ENCODE measurements at regions of chr3 and their contacts with region 1.

Region 1: DNA sequence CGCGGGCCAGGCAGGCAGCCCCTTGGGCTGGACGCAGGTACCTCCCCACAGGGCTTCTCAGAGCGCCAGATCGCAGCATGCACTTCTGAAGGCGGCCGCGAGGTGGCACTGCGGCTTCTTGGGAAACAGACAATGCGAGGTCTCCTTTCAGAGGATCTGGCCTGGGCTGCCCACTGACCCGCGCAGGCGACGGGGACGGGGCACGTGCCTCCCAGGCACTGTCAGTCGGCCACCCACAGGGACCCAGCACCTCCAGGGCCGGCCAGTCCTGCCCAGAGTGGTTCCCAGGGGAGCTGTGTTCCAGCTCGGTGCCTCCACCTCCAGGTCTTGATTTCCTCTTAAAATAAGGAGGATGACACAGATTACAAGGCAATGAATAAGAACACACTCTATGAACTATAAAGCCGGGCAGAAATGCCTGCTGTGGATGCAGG is 24.4 kb upstream of the TXNRD3 start:
- DNase-seq: no peak
- H3K4me3 ChIP-seq: peak overlapping the region; percentile 35; the same call in 1 of the 2 replicates
- CTCF ChIP-seq: peak; percentile 97

Region 2: GRCh38 chr3:126197854-126198584 is 481.3 kb before region 1 on chr3:
- CTCF ChIA-PET with region 1: no interaction called
- POLR2A ChIA-PET with region 1: no interaction called
- DNase-seq: no peak
- H3K4me3 ChIP-seq: no peak overlapping the region
- CTCF ChIP-seq: peak; percentile 89

Region 3: GRCh38 chr3:126431103-126431534 is 248.2 kb before region 1 on chr3:
- CTCF ChIA-PET with region 1: no interaction called
- POLR2A ChIA-PET with region 1: no interaction called
- DNase-seq: no peak
- H3K4me3 ChIP-seq: no peak overlapping the region
- CTCF ChIP-seq: no peak

Region 4: GRCh38 chr3:126522363-126522788 is 157.0 kb before region 1 on chr3:
- CTCF ChIA-PET with region 1: interaction called, 20 read pairs
- POLR2A ChIA-PET with region 1: no interaction called
- DNase-seq: no peak
- H3K4me3 ChIP-seq: no peak overlapping the region
- CTCF ChIP-seq: peak; percentile 83

Region 5: DNA sequence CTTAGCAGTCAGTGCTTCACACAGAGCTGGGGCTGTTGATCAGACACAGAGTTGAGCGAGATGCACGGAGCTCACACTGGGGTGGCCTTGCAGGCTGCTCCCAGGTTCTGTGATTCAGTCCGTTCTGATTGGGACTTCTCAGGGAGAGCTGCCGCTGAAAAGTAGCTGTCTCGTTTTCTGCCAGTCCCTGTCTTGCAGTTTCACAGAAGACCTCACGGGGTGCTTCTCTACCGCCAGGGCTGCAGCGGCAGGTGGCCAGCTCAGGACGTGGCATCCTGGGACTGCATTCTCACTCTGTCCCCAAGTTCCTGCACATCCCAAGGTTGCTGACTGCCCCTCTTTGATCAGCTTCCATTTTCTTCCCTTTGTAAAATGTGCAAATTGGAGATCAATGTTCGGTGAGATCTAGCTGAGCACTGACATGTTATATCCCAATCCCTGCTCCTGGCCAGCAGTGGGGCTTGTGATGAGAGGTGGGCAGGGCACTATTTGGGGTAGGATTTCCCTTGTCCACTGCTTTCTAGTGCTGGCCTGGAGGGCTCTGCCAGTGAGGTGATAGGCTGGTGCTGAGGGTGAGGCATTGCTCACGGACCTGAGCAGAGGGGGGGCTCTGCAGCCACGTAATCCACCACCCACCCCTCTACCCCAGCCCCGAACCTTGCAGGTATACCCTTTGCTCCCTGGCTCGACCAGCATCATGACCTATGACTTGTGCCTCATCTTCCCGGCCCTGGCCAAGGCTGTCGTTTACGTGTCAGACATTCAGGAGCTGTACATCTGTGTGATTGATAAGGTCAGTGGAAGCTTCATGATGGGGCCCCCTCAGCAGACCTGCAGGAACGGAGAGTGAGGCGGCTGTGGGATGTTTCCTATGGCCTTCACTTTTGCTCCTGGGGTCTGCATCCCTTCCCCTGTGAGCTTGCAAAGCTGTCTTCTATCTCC is 19.1 kb before region 1 on chr3:
- CTCF ChIA-PET with region 1: interaction called, 29 read pairs
- POLR2A ChIA-PET with region 1: no interaction called
- DNase-seq: no peak
- H3K4me3 ChIP-seq: no peak overlapping the region
- CTCF ChIP-seq: peak; percentile 33

Region 6: GRCh38 chr3:126692845-126693244 is 13.5 kb after region 1 on chr3:
- CTCF ChIA-PET with region 1: interaction called, 62 read pairs
- POLR2A ChIA-PET with region 1: no interaction called
- DNase-seq: no peak
- H3K4me3 ChIP-seq: no peak overlapping the region
- CTCF ChIP-seq: no peak

Region 7: GRCh38 chr3:126743350-126743749 is 64.0 kb after region 1 on chr3:
- CTCF ChIA-PET with region 1: interaction called, 15 read pairs
- POLR2A ChIA-PET with region 1: no interaction called
- DNase-seq: no peak
- H3K4me3 ChIP-seq: no peak overlapping the region
- CTCF ChIP-seq: no peak

Region 8: GRCh38 chr3:127426444-127427153 is 747.3 kb after region 1 on chr3:
- CTCF ChIA-PET with region 1: no interaction called
- POLR2A ChIA-PET with region 1: no interaction called
- DNase-seq: no peak
- H3K4me3 ChIP-seq: no peak overlapping the region
- CTCF ChIP-seq: no peak

Region 9: DNA sequence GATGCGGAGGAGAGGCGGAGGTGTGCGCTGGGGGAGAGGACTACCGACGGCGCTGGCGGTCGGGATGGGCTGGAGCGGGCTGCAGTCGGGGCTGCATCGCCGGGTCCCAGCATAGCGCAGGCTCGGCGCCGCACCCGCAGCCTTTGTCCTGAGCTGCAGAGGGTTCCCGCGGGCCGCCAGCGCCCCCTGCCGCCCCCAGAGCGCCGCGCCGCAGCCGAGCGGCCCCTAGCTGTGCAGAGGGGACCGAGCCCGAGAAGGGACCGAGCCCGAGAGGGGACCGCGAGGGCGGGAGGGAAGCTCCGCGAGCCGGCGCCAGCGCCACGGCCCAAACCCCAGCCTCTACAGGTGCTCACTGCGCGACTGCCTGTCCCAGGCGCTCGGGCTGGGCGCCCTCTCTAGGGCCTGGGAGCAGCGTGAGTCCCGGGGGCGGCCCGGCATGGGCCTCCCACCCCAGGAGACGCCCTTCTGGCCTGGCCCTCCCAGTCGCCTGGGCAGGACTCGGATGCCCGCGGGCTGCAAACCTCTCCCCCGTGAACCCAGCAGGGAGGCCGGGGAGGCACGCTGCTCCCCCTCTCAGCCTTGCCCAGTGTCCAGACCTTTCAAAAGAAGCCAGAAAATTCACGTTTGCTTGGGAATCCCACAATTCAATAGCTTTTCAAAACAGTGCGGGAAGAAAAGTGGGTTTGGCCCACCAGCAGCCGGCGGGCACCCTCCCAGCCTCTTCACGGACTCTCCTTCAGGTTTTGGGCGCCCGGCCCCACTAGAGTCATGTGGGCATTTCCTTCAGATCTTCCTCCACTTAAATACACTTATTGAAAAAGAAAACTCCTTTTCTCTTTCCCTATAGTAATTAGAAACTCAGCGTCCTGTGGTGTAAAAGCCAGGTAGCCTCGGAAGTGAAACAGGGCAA is 776.5 kb after region 1 on chr3:
- CTCF ChIA-PET with region 1: interaction called, 81 read pairs
- POLR2A ChIA-PET with region 1: no interaction called
- DNase-seq: no peak
- H3K4me3 ChIP-seq: peak overlapping the region; percentile 44
- CTCF ChIP-seq: peak; percentile 92

Measured in AG04449 (cell line).